ENCODE measurements at regions of chr5 and their contacts with region 1.

Region 1: DNA sequence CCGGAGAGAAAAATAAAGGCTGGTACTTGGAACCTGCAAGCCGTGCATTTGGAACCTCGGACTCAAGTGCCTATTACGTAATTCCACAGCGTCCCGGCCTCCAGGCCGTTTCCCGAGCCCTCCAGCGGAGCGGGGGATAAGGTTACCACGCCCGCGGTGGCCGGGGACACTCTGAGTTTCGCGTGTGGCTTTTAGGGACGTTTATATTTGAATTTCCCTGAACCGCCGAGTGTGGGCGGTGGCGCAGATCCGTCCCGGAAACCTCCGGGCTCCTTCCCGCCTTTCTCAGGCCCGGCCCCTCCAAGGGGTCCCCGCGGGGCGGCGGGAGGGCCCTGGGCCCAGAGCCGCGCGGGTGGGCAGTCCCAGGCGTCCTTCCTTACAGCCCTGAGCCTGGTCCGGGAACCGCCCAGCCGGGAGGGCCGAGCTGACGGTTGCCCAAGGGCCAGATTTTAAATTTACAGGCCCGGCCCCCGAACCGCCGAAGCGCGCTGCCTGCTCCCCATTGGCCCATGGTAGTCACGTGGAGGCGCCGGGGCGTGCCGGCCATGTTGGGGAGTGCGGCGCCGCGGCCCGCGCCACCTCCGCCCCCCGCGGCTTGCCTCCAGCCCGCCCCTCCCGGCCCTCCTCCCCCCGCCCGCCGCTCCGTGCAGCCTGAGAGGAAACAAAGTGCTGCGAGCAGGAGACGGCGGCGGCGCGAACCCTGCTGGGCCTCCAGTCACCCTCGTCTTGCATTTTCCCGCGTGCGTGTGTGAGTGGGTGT is at the start of gene LMNB1:
- DNase-seq: peak; percentile 94 to 97 (median 94)
- ATAC-seq: peak; percentile 83
- H3K4me3 ChIP-seq: peak within 1 kb of the TSS; percentile 93
- H3K27ac ChIP-seq: peak within 1 kb of the TSS; percentile 98
- H3K4me1 ChIP-seq: peaks cover 3 to 19% of the 10 kb centered on the region in 2 experiments; a peak in 4 of 5 replicates
- H3K27me3 ChIP-seq: no peaks in the 10 kb centered on the region
- CTCF ChIP-seq: no peak
- EP300 ChIP-seq: peak; percentile 57
- POLR2A ChIP-seq: peak; percentile 73
- RAD21 ChIP-seq: peak in 1 of 2 experiments; percentile 18; a peak in 3 of 4 replicates
- polyA plus RNA-seq, gene LMNB1: 2.8 to 7.6 TPM

Region 2: GRCh38 chr5:126514131-126514557 is 262.5 kb before region 1 on chr5:
- CTCF ChIA-PET with region 1: no interaction called
- POLR2A ChIA-PET with region 1: no interaction called
- in situ Hi-C with region 1: no loop called
- intact Hi-C with region 1: loop called (anchors 5 kb)
- DNase-seq: peak in 3 of 4 experiments; percentile 30 to 95 (median 75)
- ATAC-seq: peak; percentile 78
- H3K4me3 ChIP-seq: peak overlapping the region; percentile 19; the same call in 1 of the 2 replicates
- H3K27ac ChIP-seq: peak overlapping the region; percentile 98
- H3K4me1 ChIP-seq: peaks cover 3 to 47% of the 10 kb centered on the region in 2 experiments
- H3K27me3 ChIP-seq: no peaks in the 10 kb centered on the region
- CTCF ChIP-seq: no peak
- EP300 ChIP-seq: peak; percentile 78
- POLR2A ChIP-seq: no peak
- RAD21 ChIP-seq: no peak

Region 3: DNA sequence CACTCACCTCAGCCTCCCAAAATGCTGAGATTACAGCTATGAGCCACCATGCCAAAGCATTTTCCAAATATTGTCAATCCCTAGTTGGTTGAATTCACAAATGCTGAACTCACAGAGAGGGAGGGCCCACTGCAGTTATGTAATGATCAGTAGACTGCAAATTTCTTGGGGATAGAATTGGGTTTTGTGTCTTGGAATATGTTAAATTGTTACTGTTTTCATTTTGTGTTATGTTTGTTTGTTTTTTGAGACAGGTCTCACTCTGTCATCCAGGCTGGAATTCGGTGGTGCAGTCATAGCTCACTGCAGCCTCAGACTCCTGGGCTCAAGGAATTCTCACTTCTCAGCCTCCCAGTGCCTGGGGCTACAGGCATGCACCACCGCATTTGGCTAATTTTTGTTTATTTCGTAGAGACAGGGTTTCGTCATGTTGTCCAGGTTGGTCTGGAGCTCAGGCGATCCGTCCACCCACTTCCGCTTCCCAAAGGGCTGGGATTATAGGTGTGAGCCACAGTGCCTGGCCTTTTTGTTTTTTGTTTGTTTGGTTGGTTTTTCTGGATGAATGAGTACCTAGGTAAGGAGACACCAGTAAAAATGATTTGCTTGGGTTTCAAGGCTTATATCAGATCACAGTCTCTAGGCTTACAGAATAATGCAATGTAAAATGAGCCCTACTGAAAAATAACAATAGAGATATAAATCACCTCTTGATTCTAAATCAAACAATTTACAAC is 31.3 kb before region 1 on chr5:
- CTCF ChIA-PET with region 1: no interaction called
- POLR2A ChIA-PET with region 1: interaction called, 7 read pairs
- in situ Hi-C with region 1: no loop called
- intact Hi-C with region 1: loop called (anchors 2 kb)
- DNase-seq: no peak
- ATAC-seq: no peak
- H3K4me3 ChIP-seq: no peak overlapping the region
- H3K27ac ChIP-seq: peak overlapping the region; percentile 39; the same call in 2 of the 3 replicates
- H3K4me1 ChIP-seq: peaks cover 19 to 30% of the 10 kb centered on the region in 2 experiments
- H3K27me3 ChIP-seq: no peaks in the 10 kb centered on the region
- CTCF ChIP-seq: no peak
- EP300 ChIP-seq: no peak
- POLR2A ChIP-seq: no peak
- RAD21 ChIP-seq: no peak

Region 4: GRCh38 chr5:126754609-126755008 is 22.1 kb before region 1 on chr5:
- CTCF ChIA-PET with region 1: no interaction called
- POLR2A ChIA-PET with region 1: interaction called, 12 read pairs
- in situ Hi-C with region 1: no loop called
- intact Hi-C with region 1: loop called (anchors 2 kb)
- DNase-seq: peak in 1 of 4 experiments; percentile 43
- ATAC-seq: peak; percentile 57
- H3K4me3 ChIP-seq: no peak overlapping the region
- H3K27ac ChIP-seq: no peak overlapping the region
- H3K4me1 ChIP-seq: peaks cover 21 to 44% of the 10 kb centered on the region in 2 experiments
- H3K27me3 ChIP-seq: no peaks in the 10 kb centered on the region
- CTCF ChIP-seq: no peak
- EP300 ChIP-seq: no peak; the same call in 1 of the 2 replicates
- POLR2A ChIP-seq: no peak
- RAD21 ChIP-seq: no peak

Region 5: DNA sequence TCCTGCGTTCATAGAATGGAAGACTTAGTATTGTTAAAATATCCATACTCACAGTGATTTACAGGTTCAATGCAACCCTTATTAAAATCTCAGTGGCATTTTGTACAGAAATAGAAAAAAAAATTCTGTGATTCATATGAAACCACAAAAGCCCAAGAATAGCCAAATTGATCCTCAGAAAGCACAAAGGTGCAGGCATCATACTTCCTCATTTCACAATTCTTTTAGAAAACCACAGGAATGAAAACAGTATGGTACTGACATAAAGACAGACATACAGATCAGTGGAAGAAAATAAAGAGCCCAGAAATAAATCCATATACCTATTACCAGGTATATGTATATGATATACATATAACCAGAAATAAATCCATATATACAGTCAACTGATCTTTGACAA is 427.1 kb after region 1 on chr5:
- CTCF ChIA-PET with region 1: no interaction called
- POLR2A ChIA-PET with region 1: no interaction called
- in situ Hi-C with region 1: no loop called
- intact Hi-C with region 1: no loop called
- DNase-seq: no peak
- ATAC-seq: no peak
- H3K4me3 ChIP-seq: no peak overlapping the region
- H3K27ac ChIP-seq: no peak overlapping the region
- H3K4me1 ChIP-seq: no peaks in the 10 kb centered on the region
- H3K27me3 ChIP-seq: no peaks in the 10 kb centered on the region
- CTCF ChIP-seq: no peak
- EP300 ChIP-seq: no peak
- POLR2A ChIP-seq: no peak
- RAD21 ChIP-seq: no peak